ENCODE measurements at regions of chr16 and their contacts with region 1.

Region 1: DNA sequence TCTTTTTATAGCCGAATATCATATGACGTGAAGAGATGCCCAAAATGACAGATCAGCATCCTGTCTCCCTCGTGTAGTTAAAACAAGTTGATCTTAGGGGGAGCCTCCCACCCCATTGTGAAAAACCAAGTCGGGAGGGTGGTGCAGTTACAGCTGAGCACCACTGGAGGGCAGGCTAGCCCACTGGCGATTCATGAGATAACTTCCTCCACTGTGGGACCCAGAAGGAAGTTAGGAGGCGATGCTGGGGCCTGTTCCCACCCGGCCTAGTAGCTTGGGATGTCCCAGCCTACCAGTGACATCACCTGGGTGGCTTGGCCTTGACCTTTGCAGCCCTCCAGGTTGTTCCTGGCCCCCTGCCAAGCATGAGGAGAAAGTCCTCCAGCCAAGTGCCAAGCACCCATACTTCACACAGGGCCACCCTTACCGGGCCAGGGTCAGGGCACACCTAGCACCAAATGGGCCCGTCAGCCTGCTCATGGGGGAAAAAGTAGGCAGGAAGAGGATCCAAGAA is 8.1 kb upstream of the CPNE2 start:
- DNase-seq: peak; percentile 66 to 83 (median 73)
- ATAC-seq: peak; percentile 39 to 86 (median 84)
- H3K4me3 ChIP-seq: no peak overlapping the region
- H3K27ac ChIP-seq: peak overlapping the region in 1 of 12 donors; percentile 44
- H3K4me1 ChIP-seq: peaks cover 0 to 13% (median 3%) of the 10 kb centered on the region in 12 donors
- H3K27me3 ChIP-seq: no peaks in the 10 kb centered on the region
- CTCF ChIP-seq: peak; percentile 95 to 99 (median 98)
- POLR2A ChIP-seq: no peak

Region 2: GRCh38 chr16:55701442-55702319 is 1382.6 kb before region 1 on chr16:
- intact Hi-C with region 1: no loop called
- DNase-seq: peak; percentile 46 to 79 (median 60)
- ATAC-seq: peak in 3 of 4 donors; percentile 65 to 84 (median 77)
- H3K4me3 ChIP-seq: no peak overlapping the region
- H3K27ac ChIP-seq: no peak overlapping the region
- H3K4me1 ChIP-seq: peaks cover 0 to 3% (median 0%) of the 10 kb centered on the region in 12 donors
- H3K27me3 ChIP-seq: peaks cover 0 to 6% (median 0%) of the 10 kb centered on the region in 9 donors
- CTCF ChIP-seq: peak; percentile 45 to 73 (median 59)
- POLR2A ChIP-seq: no peak

Region 3: GRCh38 chr16:57413301-57413730 is 329.0 kb after region 1 on chr16:
- intact Hi-C with region 1: loop called in 2 of 10 experiments (anchors 10 kb)
- DNase-seq: no peak
- ATAC-seq: no peak
- H3K4me3 ChIP-seq: no peak overlapping the region
- H3K27ac ChIP-seq: no peak overlapping the region
- H3K4me1 ChIP-seq: peaks cover 3 to 43% (median 29%) of the 10 kb centered on the region in 12 donors
- H3K27me3 ChIP-seq: no peaks in the 10 kb centered on the region
- CTCF ChIP-seq: no peak
- POLR2A ChIP-seq: no peak

Region 4: DNA sequence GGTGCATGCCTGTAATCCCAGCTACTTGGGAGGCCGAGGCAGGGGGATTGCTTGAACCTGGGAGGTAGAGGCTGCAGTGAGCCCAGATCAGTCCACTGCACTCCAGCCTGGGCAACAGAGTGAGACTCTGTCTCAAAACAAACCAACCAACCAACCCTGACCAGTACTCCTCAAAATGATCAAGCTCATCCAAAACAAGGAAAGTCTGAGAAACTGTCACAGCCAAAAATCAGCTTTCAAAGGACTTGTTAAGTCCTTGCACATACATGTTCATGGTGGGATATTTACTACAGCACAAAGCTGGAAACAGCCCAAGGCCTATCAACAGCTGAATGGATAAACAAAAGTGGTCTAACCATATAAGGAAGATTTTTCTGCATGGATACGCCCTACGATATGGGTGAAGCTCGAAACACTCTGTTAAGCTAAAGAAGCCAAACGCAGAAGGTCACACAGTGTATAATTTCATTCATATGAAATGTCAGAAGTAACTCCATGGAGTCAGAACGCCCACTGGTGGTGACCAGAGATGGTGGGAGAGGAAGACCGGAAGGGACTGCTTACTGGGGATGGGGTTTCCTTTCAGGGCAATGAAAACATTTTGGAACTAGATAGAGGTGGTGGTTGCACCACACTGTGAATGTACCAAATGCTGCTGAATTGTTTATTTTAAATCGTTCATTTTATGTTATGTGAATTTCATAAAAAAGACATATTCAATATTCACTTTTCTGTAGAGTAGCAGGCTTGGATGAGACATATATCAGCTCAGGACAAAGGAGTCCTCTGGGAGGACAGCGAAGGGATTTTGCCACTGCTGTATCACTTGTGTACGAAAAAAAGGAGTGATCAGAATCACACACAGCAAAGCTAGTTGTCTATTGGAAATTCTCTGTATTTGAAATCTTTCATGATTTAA is 338.0 kb after region 1 on chr16:
- intact Hi-C with region 1: loop called in 4 of 10 experiments (anchors 10 kb)
- DNase-seq: peak in 3 of 5 donors; percentile 43 to 59 (median 46)
- ATAC-seq: peak in 3 of 4 donors; percentile 29 to 60 (median 46)
- H3K4me3 ChIP-seq: no peak overlapping the region
- H3K27ac ChIP-seq: peak overlapping the region in 1 of 12 donors; percentile 39
- H3K4me1 ChIP-seq: peaks cover 4 to 52% (median 33%) of the 10 kb centered on the region in 12 donors
- H3K27me3 ChIP-seq: no peaks in the 10 kb centered on the region
- CTCF ChIP-seq: peak; percentile 48 to 80 (median 62)
- POLR2A ChIP-seq: no peak

Region 5: GRCh38 chr16:57544119-57544653 is 459.9 kb after region 1 on chr16:
- intact Hi-C with region 1: no loop called
- DNase-seq: no peak
- ATAC-seq: peak in 3 of 4 donors; percentile 20 to 41 (median 40)
- H3K4me3 ChIP-seq: peak overlapping the region in 1 of 12 donors; percentile 50
- H3K27ac ChIP-seq: no peak overlapping the region
- H3K4me1 ChIP-seq: peaks cover 0 to 28% (median 0%) of the 10 kb centered on the region in 12 donors
- H3K27me3 ChIP-seq: peaks cover 0 to 20% (median 0%) of the 10 kb centered on the region in 9 donors
- CTCF ChIP-seq: no peak
- POLR2A ChIP-seq: no peak

Region 6: DNA sequence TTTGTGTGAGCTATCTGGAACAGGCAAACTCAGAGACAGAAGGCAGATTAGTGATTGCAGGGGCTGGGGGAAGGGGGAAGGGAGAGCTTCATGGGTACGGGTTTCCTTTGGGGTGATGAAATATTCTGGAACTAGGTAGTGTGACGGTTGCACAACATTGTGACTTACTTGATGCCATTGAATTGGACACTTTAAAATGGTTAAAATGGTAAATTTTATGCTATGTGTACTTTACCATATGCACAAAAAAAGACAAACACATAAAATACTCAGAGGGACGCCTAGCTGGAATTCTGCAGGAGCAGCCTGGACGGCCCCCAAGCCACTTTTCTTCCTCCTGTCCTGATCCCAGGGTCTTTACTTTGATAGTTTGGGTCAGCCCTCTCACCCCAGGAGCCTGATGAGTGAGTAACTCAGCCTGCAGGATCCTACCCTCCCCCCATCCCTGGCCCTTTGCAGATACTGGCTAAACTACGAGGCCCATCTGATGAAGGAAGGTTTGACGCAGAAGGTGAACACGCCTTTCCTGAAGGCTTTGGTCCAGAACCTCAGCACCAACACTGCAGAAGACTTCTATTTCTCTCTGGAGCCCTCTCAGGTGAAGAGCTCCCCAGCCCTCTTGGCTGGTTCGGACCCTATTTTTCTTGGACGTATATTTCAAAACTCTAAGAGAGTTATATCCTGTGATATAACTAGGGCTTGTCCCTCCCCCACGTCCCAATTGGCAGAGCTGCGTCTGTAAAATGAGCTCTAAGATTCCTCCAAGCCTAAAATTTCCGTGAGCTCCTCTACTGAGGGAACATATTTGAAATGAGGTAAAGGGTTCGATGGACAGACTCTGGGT is 591.6 kb after region 1 on chr16:
- intact Hi-C with region 1: no loop called
- DNase-seq: peak in 3 of 5 donors; percentile 20 to 36 (median 33)
- ATAC-seq: peak in 2 of 4 donors; percentile 50 to 86
- H3K4me3 ChIP-seq: no peak overlapping the region
- H3K27ac ChIP-seq: peak overlapping the region in 2 of 12 donors; percentile 34 to 42
- H3K4me1 ChIP-seq: peaks cover 0 to 13% (median 4%) of the 10 kb centered on the region in 12 donors
- H3K27me3 ChIP-seq: peaks cover 0 to 4% (median 0%) of the 10 kb centered on the region in 9 donors
- CTCF ChIP-seq: no peak
- POLR2A ChIP-seq: no peak

Measured in heart left ventricle (tissue), 16 donors.